T-cell (primary cell): ENCODE measurements at regions of chr13 and their contacts with region 1.

Region 1: GRCh38 chr13:71540098-71540497 is 326.9 kb downstream of the DACH1 start:
- DNase-seq: no peak
- ATAC-seq: no peak
- H3K4me3 ChIP-seq: no peak overlapping the region
- H3K4me3 Mint-ChIP-seq: no peak overlapping the region
- H3K27ac ChIP-seq: no peak overlapping the region
- H3K27ac Mint-ChIP-seq: no peak overlapping the region
- H3K4me1 ChIP-seq: no peaks in the 10 kb centered on the region
- H3K4me1 Mint-ChIP-seq: no peaks in the 10 kb centered on the region
- H3K27me3 ChIP-seq: no peaks in the 10 kb centered on the region
- H3K27me3 Mint-ChIP-seq: no peaks in the 10 kb centered on the region

Region 2: DNA sequence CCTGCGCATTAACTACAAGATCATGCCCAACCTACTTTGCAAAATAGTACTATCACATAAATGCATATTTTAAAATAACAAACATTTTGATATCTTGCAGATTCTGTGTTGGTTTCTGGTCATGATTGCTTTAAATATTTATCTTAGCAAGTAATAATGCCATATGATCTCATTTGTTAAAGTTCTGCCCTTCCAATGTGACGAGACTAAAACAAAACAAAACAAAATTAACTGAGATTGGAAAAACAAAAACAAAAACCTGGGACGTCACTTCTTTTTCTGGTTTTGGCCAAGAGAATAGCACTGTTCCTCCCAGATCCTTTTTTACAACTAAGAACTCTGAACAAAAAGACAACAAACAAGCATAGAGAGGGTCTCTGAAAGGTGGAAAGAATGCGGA is 109.4 kb before region 1 on chr13:
- CTCF ChIA-PET with region 1: interaction called in 1 of 2 experiments, 13 read pairs
- POLR2A ChIA-PET with region 1: no interaction called
- DNase-seq: no peak
- ATAC-seq: no peak
- H3K4me3 ChIP-seq: no peak overlapping the region
- H3K4me3 Mint-ChIP-seq: no peak overlapping the region
- H3K27ac ChIP-seq: no peak overlapping the region
- H3K27ac Mint-ChIP-seq: no peak overlapping the region
- H3K4me1 ChIP-seq: no peaks in the 10 kb centered on the region
- H3K4me1 Mint-ChIP-seq: no peaks in the 10 kb centered on the region
- H3K27me3 ChIP-seq: no peaks in the 10 kb centered on the region
- H3K27me3 Mint-ChIP-seq: no peaks in the 10 kb centered on the region

Region 3: GRCh38 chr13:71577127-71577526 is 37.0 kb after region 1 on chr13:
- CTCF ChIA-PET with region 1: no interaction called
- POLR2A ChIA-PET with region 1: no interaction called
- DNase-seq: no peak
- ATAC-seq: no peak
- H3K4me3 ChIP-seq: no peak overlapping the region
- H3K4me3 Mint-ChIP-seq: no peak overlapping the region
- H3K27ac ChIP-seq: no peak overlapping the region
- H3K27ac Mint-ChIP-seq: no peak overlapping the region
- H3K4me1 ChIP-seq: no peaks in the 10 kb centered on the region
- H3K4me1 Mint-ChIP-seq: no peaks in the 10 kb centered on the region
- H3K27me3 ChIP-seq: no peaks in the 10 kb centered on the region
- H3K27me3 Mint-ChIP-seq: no peaks in the 10 kb centered on the region